ENCODE measurements at regions of chrX and their contacts with region 1.

Region 1: DNA sequence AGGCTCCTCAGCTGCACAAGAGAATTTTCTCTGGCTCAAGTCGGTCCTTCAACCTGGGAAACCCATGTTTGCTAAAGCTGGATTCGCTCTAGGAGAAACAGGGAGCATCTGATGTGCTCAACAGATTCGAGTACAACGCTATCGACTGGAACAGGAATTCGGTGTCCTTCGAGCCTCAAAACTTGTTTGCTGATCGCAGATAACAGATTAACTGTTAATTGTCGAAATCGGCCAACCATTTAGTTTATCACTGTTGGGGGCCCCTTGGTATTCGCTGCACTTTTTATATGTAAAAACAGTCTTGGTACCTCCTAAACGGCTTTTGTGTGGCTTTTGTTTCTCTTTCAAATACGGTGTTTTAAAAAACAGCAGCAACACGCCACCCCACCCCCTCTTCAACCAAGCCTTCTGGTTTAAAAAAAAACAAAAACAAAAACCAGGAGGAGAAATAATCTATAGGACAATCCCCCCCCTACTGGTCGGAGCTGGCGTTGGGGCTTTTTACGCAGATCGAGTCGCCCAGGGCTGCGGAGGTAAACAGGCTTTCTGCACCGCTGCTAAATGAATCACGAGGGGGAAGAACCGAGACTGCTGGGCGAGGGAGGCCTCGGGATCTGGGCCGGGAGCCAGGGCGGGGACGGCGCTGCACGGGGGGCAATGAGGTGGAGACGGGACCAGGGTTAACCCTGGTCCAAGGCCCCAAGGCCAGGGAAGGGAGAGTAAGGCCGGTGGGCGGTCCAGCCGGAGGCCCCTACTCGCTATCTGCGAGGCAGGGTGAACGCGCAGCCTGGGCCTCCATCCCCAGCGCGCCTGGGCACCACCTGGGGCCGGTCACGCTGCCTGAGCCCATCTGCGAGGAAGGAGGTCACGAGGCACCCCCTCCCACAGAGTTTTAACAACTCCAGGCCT is 71.7 kb upstream of the BCOR start:
- DNase-seq: peak; percentile 75
- ATAC-seq: peak; percentile 73
- H3K4me3 ChIP-seq: no peak overlapping the region
- H3K27ac ChIP-seq: no peak overlapping the region
- H3K4me1 ChIP-seq: no peaks in the 10 kb centered on the region; the same call in 1 of the 2 replicates
- H3K27me3 ChIP-seq: peaks cover 21% of the 10 kb centered on the region
- CTCF ChIP-seq: peak; percentile 64
- POLR2A ChIP-seq: no peak
- RAD21 ChIP-seq: peak; percentile 56

Region 2: GRCh38 chrX:39652336-39653131 is 516.9 kb before region 1 on chrX:
- CTCF ChIA-PET with region 1: no interaction called
- POLR2A ChIA-PET with region 1: no interaction called
- dilution Hi-C with region 1: no loop called
- in situ Hi-C with region 1: no loop called
- intact Hi-C with region 1: loop called (anchors 10 kb)
- DNase-seq: peak; percentile 14
- ATAC-seq: no peak
- H3K4me3 ChIP-seq: no peak overlapping the region
- H3K27ac ChIP-seq: no peak overlapping the region
- H3K4me1 ChIP-seq: no peaks in the 10 kb centered on the region
- H3K27me3 ChIP-seq: peaks cover 42% of the 10 kb centered on the region
- CTCF ChIP-seq: peak; percentile 39
- POLR2A ChIP-seq: no peak
- RAD21 ChIP-seq: peak; percentile 44

Region 3: DNA sequence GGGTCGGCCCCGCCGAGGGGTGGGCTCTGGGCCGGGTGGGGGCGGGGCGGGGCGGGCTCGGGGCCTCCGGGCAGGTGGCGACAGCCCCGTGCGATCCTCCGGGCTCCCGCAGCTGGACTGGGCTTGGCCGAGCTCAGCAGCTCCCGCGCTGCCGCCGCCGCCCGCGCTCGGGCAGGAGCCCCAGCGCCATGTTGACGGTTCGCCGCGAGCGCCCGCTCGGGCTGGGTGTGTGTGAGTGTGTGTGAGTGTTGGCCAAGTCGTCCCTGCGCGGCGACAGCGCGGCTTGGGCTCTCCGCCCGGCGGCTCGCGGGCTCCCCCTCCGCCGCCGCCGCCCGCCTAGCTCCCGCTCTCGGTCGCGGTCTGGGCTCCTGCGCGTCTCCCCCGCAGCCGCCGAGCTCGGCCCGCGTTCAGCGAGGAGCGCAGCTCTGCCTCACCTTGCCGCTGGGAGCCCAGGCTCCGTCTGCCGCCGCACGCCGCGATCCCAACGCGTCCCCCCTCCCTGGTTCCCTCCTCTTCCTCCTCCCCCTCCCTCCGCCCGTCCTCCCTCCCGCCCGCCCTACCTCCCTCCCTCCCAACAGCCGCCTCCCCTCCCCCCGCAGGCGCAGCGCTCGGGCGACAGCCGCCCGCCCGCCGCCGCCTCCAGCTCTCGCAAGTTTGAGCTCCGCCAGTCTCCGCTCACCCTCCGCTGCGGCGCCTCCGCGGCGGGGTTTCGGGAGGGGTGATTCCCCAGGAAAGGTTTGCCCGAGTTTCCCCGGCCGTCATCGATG is 71.8 kb before region 1 on chrX and contains the start of gene BCOR:
- CTCF ChIA-PET with region 1: no interaction called
- POLR2A ChIA-PET with region 1: no interaction called
- dilution Hi-C with region 1: no loop called
- in situ Hi-C with region 1: no loop called
- intact Hi-C with region 1: loop called (anchors 5 kb)
- DNase-seq: peak; percentile 58
- ATAC-seq: peak; percentile 36
- H3K4me3 ChIP-seq: peak within 1 kb of the TSS; percentile 86
- H3K27ac ChIP-seq: peak within 1 kb of the TSS; percentile 66
- H3K4me1 ChIP-seq: peaks cover 3% of the 10 kb centered on the region
- H3K27me3 ChIP-seq: no peaks in the 10 kb centered on the region; the same call in 1 of the 2 replicates
- CTCF ChIP-seq: no peak
- POLR2A ChIP-seq: peak; percentile 86
- RAD21 ChIP-seq: no peak
- total RNA-seq, gene BCOR: 7.5 and 8.9 TPM in 2 replicates

Region 4: DNA sequence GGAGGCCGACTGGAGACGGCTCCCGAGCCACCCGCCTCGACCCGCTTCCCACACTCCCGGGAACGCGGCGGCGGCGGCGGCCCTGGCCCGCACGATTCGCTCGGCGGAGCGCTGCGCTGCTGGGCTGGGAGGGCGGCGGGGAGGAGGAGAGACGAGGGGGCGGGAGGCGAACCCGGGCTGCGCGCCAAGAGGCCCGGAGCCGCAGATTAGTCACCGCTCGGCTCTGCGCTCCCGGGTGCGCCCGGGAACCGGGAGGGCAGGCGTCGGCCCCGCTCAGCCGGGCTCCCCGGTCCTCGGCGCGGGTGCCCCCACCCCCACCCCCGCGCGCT is 60.5 kb before region 1 on chrX:
- CTCF ChIA-PET with region 1: no interaction called
- POLR2A ChIA-PET with region 1: no interaction called
- dilution Hi-C with region 1: no loop called
- in situ Hi-C with region 1: loop called (anchors 5 kb)
- intact Hi-C with region 1: no loop called
- DNase-seq: peak; percentile 76
- ATAC-seq: peak; percentile 65
- H3K4me3 ChIP-seq: peak overlapping the region; percentile 72
- H3K27ac ChIP-seq: peak overlapping the region; percentile 71
- H3K4me1 ChIP-seq: peaks cover 10% of the 10 kb centered on the region
- H3K27me3 ChIP-seq: peaks cover 3% of the 10 kb centered on the region; the same call in 1 of the 2 replicates
- CTCF ChIP-seq: no peak
- POLR2A ChIP-seq: no peak
- RAD21 ChIP-seq: no peak

Region 5: GRCh38 chrX:40244980-40245379 is 75.5 kb after region 1 on chrX:
- CTCF ChIA-PET with region 1: no interaction called
- POLR2A ChIA-PET with region 1: no interaction called
- dilution Hi-C with region 1: no loop called
- in situ Hi-C with region 1: no loop called
- intact Hi-C with region 1: no loop called
- DNase-seq: peak; percentile 14
- ATAC-seq: no peak; the same call in 1 of the 2 replicates
- H3K4me3 ChIP-seq: no peak overlapping the region
- H3K27ac ChIP-seq: no peak overlapping the region
- H3K4me1 ChIP-seq: peaks cover 6% of the 10 kb centered on the region
- H3K27me3 ChIP-seq: peaks cover 9% of the 10 kb centered on the region
- CTCF ChIP-seq: 0 out of 2 replicates have a peak, but pooled peaks have one; percentile 5
- POLR2A ChIP-seq: no peak
- RAD21 ChIP-seq: no peak

Region 6: GRCh38 chrX:40291553-40291952 is 122.1 kb after region 1 on chrX:
- CTCF ChIA-PET with region 1: no interaction called
- POLR2A ChIA-PET with region 1: no interaction called
- dilution Hi-C with region 1: no loop called
- in situ Hi-C with region 1: no loop called
- intact Hi-C with region 1: no loop called
- DNase-seq: no peak
- ATAC-seq: no peak
- H3K4me3 ChIP-seq: no peak overlapping the region
- H3K27ac ChIP-seq: no peak overlapping the region
- H3K4me1 ChIP-seq: no peaks in the 10 kb centered on the region
- H3K27me3 ChIP-seq: peaks cover 10% of the 10 kb centered on the region
- CTCF ChIP-seq: no peak
- POLR2A ChIP-seq: no peak
- RAD21 ChIP-seq: no peak

Measured in IMR-90 (cell line).